A673 (cell line): ENCODE measurements at regions of chr7 and their contacts with region 1.

Region 1: DNA sequence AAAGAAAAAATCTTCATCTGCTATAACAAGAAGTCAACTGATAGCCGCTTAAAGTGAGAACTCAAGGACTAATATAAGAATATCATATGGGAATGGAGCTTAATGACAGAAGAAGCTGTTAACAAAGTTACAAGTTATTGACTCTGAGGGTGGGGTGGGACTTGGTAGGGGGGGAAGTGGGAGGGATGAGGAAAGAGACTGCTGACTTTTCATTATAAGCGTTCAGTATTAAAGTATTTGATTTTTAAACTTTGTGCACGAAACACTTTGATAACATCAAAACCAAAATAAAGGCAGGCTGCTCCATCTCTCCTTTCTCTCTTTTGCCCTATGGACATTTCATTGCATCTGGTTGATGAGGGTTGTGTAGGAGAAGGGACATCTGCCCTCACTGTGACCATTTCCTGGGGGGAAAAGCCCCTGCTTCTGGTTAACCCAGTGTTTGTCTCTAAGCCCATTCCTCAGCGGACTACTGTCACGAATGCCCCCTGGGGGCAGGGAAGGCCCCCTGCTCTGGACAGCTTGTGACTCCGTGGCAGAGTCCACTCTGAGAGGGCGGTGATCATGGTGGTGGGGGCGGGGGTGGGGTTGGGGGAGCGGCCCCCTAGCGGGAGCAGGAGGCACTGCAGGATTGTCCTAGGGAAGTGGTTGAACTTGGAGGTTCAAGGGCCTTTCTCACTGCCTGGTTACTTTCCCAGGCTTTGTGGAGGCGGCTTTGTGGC is 17.4 kb downstream of the SLC13A4 start:
- DNase-seq: peak; percentile 16
- H3K4me3 ChIP-seq: no peak overlapping the region
- H3K27ac ChIP-seq: no peak overlapping the region
- H3K4me1 ChIP-seq: no peaks in the 10 kb centered on the region
- H3K27me3 ChIP-seq: peaks cover 62% of the 10 kb centered on the region
- CTCF ChIP-seq: peak; percentile 56

Region 2: DNA sequence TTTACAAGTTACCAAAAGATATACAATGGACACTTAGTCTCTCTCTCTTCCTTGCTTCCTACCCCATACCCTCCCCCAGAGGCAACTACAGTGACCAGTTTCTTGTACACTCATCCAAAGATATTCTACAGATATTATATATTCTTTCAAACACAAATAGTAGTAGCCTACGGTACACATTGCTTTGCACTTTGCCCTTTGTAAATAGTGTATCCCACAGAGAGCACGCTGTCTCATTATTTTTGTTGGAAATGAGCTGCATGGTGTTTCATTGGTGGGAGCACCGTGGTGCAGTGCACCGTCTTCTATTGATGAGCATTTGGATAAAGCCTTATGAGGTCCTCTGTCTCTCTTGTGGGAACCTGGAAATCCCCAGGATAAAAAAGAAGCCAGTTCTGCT is 452.8 kb before region 1 on chr7:
- CTCF ChIA-PET with region 1: interaction called, 13 read pairs
- POLR2A ChIA-PET with region 1: no interaction called
- intact Hi-C with region 1: no loop called
- DNase-seq: no peak
- H3K4me3 ChIP-seq: no peak overlapping the region
- H3K27ac ChIP-seq: no peak overlapping the region
- H3K4me1 ChIP-seq: peaks cover 6% of the 10 kb centered on the region
- H3K27me3 ChIP-seq: no peaks in the 10 kb centered on the region
- CTCF ChIP-seq: no peak

Region 3: GRCh38 chr7:135742371-135742770 is 31.8 kb after region 1 on chr7:
- CTCF ChIA-PET with region 1: no interaction called
- POLR2A ChIA-PET with region 1: no interaction called
- intact Hi-C with region 1: no loop called
- DNase-seq: no peak
- H3K4me3 ChIP-seq: no peak overlapping the region
- H3K27ac ChIP-seq: no peak overlapping the region
- H3K4me1 ChIP-seq: no peaks in the 10 kb centered on the region
- H3K27me3 ChIP-seq: peaks cover 52% of the 10 kb centered on the region
- CTCF ChIP-seq: no peak

Region 4: GRCh38 chr7:137521451-137521850 is 1810.9 kb after region 1 on chr7:
- CTCF ChIA-PET with region 1: interaction called, 11 read pairs
- POLR2A ChIA-PET with region 1: no interaction called
- intact Hi-C with region 1: no loop called
- DNase-seq: no peak
- H3K4me3 ChIP-seq: no peak overlapping the region
- H3K27ac ChIP-seq: no peak overlapping the region
- H3K4me1 ChIP-seq: no peaks in the 10 kb centered on the region
- H3K27me3 ChIP-seq: peaks cover 6% of the 10 kb centered on the region
- CTCF ChIP-seq: no peak